HCT116 (cell line): ENCODE measurements at regions of chr12 and their contacts with region 1.

Region 1: DNA sequence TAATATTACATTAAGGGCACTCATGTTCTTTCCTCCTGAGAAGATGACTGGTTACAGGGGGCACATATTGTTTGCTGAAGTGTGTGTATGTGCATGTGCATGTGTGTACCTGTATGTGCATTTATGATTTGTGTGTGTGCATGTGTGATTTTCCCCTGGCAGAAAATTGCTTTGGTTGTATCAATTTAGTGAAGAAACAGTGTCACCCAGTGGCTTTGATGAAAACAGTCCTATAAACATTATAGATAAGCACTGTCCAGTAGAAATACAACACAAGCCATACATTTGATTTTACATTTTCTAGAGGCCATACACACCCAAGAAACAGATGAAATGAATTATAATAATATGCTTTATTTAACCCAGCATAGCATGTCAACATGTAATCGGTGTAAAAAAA is 8.6 kb downstream of the PDE3A start:
- DNase-seq: peak; percentile 22
- ATAC-seq: peak; percentile 72
- H3K4me3 ChIP-seq: no peak overlapping the region
- H3K27ac ChIP-seq: no peak overlapping the region
- H3K4me1 ChIP-seq: no peaks in the 10 kb centered on the region
- H3K27me3 ChIP-seq: 0 out of 2 replicates have a peak, but pooled peaks cover 4% of the 10 kb centered on the region
- CTCF ChIP-seq: peak; percentile 27 to 67 (median 33); a peak in 4 of 6 replicates
- POLR2A ChIP-seq: no peak
- RAD21 ChIP-seq: peak; percentile 77

Region 2: GRCh38 chr12:19572920-19573558 is 803.9 kb before region 1 on chr12:
- CTCF ChIA-PET with region 1: no interaction called
- POLR2A ChIA-PET with region 1: no interaction called
- RAD21 ChIA-PET with region 1: no interaction called
- intact Hi-C with region 1: loop called (anchors 5 kb)
- DNase-seq: peak; percentile 32
- ATAC-seq: peak; percentile 86
- H3K4me3 ChIP-seq: no peak overlapping the region
- H3K27ac ChIP-seq: no peak overlapping the region
- H3K4me1 ChIP-seq: peaks cover 3 to 7% of the 10 kb centered on the region in 2 experiments; a peak in 3 of 4 replicates
- H3K27me3 ChIP-seq: no peaks in the 10 kb centered on the region
- CTCF ChIP-seq: peak; percentile 34 to 74 (median 71); a peak in 5 of 6 replicates
- POLR2A ChIP-seq: no peak
- RAD21 ChIP-seq: peak; percentile 57

Region 3: DNA sequence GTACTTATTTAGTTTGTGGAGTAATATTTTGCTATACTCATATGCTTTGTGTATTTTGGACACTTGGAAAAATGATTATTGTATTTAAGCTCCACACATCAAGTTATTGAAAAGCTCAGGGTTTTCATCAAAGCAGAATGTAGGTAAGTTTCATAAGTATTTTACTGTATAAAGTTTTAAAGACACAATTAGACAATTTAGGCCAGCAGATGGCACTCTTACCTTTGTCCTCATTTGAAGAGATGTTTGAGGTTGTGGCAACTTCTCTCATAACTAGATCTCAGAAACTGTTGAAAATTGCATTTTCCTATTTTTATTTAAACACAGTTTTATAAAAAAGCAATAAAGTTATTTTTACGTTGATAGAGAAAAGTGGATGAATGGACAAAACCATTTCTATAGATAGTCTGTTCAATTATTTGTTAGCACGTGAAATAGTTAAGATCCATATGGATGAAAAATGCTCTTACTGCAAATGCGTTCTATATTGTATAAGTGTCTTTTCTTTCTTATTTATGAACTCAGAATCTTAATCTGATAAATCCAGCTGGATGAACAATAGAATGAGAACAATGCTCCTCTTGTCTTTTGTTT is 637.7 kb before region 1 on chr12:
- CTCF ChIA-PET with region 1: interaction called, 3 read pairs
- POLR2A ChIA-PET with region 1: no interaction called
- RAD21 ChIA-PET with region 1: no interaction called
- intact Hi-C with region 1: loop called (anchors 2 kb)
- DNase-seq: peak; percentile 40
- ATAC-seq: peak; percentile 53
- H3K4me3 ChIP-seq: no peak overlapping the region
- H3K27ac ChIP-seq: no peak overlapping the region
- H3K4me1 ChIP-seq: no peaks in the 10 kb centered on the region
- H3K27me3 ChIP-seq: no peaks in the 10 kb centered on the region; the same call in 1 of the 2 replicates
- CTCF ChIP-seq: peak; percentile 42 to 74 (median 48); a peak in 5 of 6 replicates
- POLR2A ChIP-seq: no peak
- RAD21 ChIP-seq: peak; percentile 71

Region 4: DNA sequence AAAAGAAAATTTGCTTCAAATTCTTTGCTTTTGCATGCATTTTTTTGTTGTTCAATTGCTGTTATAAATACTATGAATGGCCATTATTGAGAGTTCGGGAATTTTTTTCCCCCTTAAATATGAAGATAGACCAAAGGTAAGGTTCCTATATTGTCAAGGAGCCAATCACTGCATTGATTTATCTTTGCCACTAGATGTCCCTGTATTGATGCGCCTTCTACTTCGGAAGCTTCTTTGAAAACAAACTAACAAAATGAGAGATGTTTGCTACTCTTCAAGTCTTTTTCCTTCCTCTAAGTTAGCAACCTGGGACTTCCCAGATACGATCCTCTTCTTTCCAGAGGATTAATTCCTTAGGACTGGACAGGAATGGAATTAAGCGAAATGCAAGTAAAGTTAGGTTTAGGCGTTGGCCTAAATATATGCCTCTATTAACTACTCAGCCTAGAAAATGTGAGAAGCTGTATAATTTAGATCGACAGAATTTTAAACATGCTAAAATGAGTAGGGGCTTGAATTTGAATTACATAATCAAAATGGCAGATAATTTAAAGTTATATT is 619.6 kb before region 1 on chr12:
- CTCF ChIA-PET with region 1: interaction called, 4 read pairs
- POLR2A ChIA-PET with region 1: no interaction called
- RAD21 ChIA-PET with region 1: no interaction called
- intact Hi-C with region 1: loop called (anchors 5 kb)
- DNase-seq: peak; percentile 19
- ATAC-seq: peak; percentile 74
- H3K4me3 ChIP-seq: no peak overlapping the region
- H3K27ac ChIP-seq: no peak overlapping the region
- H3K4me1 ChIP-seq: no peaks in the 10 kb centered on the region
- H3K27me3 ChIP-seq: no peaks in the 10 kb centered on the region
- CTCF ChIP-seq: peak; percentile 36 to 77 (median 62); a peak in 5 of 6 replicates
- POLR2A ChIP-seq: no peak
- RAD21 ChIP-seq: peak; percentile 67

Region 5: DNA sequence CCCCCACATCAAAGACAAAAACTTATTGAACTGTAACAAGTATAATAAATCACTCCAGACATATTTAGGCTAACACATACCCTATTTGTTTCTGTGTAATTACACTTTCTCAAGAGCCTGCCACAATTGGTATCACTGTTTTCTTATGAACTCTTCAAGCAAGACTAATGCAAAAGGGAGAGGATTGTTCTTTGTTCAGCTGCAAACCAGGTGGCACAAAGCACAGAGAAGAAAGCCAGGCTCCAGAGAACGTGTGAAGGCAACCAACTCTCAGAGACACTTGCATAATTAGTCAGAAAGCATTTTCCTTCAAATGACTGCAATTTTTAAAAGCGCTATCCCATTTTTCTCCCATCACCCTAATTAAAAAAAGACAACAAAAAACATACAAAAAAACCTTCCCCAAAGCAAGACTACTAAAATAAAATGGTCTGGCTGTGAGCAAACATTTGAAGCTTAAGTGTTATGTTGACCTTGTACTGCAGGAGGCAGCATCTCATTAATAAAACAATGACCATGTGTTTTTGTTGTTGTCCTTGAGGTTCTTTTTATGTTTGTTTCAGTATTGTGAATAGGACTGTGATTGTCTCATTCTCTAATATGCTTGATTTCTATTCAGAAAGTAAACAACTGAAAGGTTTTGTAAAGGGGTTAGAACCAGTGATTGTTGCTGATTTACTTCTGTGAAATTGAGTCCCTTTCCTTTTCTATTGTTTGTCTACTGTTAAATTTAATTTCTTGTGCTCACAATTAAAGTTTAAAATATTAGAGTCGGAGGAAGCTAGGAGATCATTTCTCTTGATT is 461.4 kb before region 1 on chr12:
- CTCF ChIA-PET with region 1: interaction called, 3 read pairs
- POLR2A ChIA-PET with region 1: no interaction called
- RAD21 ChIA-PET with region 1: no interaction called
- intact Hi-C with region 1: loop called (anchors 1 kb)
- DNase-seq: peak; percentile 8
- ATAC-seq: peak; percentile 65
- H3K4me3 ChIP-seq: no peak overlapping the region
- H3K27ac ChIP-seq: no peak overlapping the region
- H3K4me1 ChIP-seq: no peaks in the 10 kb centered on the region
- H3K27me3 ChIP-seq: no peaks in the 10 kb centered on the region
- CTCF ChIP-seq: peak; percentile 39 to 68 (median 47); a peak in 5 of 6 replicates
- POLR2A ChIP-seq: no peak
- RAD21 ChIP-seq: peak; percentile 75

Region 6: GRCh38 chr12:20604408-20605067 is 227.6 kb after region 1 on chr12:
- CTCF ChIA-PET with region 1: no interaction called
- POLR2A ChIA-PET with region 1: no interaction called
- RAD21 ChIA-PET with region 1: no interaction called
- intact Hi-C with region 1: no loop called
- DNase-seq: no peak
- ATAC-seq: no peak
- H3K4me3 ChIP-seq: no peak overlapping the region
- H3K27ac ChIP-seq: no peak overlapping the region
- H3K4me1 ChIP-seq: no peaks in the 10 kb centered on the region
- H3K27me3 ChIP-seq: no peaks in the 10 kb centered on the region
- CTCF ChIP-seq: no peak
- POLR2A ChIP-seq: no peak
- RAD21 ChIP-seq: no peak